ENCODE measurements at regions of chr2 and their contacts with region 1.

Region 1: GRCh38 chr2:46275973-46276372 is 21.2 kb upstream of the EPAS1 start:
- DNase-seq: peak; percentile 45 to 87 (median 82)
- ATAC-seq: peak; percentile 93
- H3K4me3 ChIP-seq: no peak overlapping the region
- H3K27ac ChIP-seq: peak overlapping the region; percentile 66 to 68
- H3K4me1 ChIP-seq: peaks cover 14 to 28% of the 10 kb centered on the region in 2 donors
- H3K27me3 ChIP-seq: no peaks in the 10 kb centered on the region
- CTCF ChIP-seq: no peak

Region 2: DNA sequence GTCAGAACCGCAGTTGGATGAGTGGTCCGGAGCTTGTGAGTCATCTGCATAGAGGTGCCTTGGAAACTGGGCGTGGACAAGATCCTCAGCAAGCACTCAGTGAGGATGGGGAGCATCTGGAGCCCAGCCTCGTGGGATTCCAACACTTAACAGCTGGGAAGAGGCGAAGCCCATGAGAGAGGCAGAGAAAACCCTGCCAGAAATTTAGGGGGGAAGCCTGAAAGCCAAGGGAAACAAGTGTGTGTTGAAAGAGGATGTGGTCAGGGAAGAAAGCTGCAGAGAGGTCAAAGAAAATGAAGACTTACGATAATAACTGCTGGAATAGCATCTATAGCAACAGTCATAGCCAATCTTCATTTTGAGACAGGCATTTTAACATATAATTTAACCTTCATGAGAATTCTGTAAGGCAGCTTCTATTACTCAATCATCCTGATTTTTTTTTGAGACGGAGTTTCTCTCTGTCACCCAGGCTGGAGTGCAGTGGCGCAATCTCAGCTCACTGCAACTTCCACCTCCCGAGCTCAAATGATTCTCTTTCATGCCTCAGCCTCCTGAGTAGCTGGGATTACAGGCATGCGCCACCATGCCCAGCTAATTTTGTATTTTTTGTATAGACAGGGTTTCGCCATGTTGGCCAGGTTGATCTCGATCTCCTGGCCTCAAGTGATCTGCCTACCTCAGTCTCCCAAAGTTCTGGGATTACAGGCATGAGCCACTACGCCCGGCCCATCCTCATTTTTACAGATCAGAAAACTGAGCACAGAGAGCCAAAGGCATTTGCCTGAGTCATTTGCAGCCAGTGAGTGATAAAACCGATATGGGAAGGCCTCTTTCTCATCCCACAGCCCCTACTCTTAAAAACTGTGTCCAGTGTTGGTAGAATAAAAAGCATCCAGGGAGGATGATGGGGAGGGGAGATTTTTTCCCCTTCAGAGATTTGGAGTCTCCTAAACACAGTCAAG is 193.2 kb before region 1 on chr2:
- intact Hi-C with region 1: loop called in 1 of 2 experiments (anchors 10 kb)
- DNase-seq: peak in 1 of 4 donors; percentile 51
- ATAC-seq: peak; percentile 57
- H3K4me3 ChIP-seq: no peak overlapping the region
- H3K27ac ChIP-seq: peak overlapping the region; percentile 43 to 69
- H3K4me1 ChIP-seq: peaks cover 10 to 46% of the 10 kb centered on the region in 2 donors
- H3K27me3 ChIP-seq: no peaks in the 10 kb centered on the region
- CTCF ChIP-seq: no peak

Region 3: DNA sequence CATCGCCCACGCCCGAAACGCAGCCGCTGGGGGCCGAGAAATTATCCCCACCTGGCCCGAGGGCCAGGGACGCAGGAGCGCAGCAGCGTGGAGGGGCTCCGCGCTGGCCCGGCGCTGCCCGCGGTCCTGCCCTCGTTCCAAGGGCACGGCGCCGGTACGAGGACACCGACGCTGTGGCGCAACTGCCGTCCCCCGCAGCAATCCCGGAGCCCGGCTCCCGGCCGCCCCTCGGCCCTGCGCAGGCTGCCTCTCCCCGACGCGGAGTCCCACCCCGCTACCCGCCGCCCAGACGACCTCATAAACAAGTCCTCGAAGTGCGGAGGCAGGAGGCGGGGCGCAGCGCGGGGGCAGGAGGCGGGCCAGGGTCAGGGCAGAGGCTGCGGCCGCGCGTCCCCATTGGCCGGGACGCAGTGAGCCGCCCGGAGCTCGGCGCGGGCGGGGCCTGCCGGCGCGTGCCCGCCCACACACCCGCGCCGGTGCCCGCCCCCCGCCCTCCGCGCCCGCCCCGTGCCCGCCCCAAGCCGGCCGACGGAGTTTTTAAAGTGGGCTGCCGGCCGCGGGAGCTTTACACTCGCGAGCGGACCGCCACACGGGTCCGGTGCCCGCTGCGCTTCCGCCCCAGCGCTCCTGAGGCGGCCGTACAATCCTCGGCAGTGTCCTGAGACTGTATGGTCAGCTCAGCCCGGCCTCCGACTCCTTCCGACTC is 21.0 kb after region 1 on chr2 and contains the start of gene EPAS1:
- intact Hi-C with region 1: no loop called
- DNase-seq: peak; percentile 82 to 99 (median 94)
- ATAC-seq: peak; percentile 81
- H3K4me3 ChIP-seq: peak within 1 kb of the TSS; percentile 79 to 93
- H3K27ac ChIP-seq: peak within 1 kb of the TSS; percentile 91 to 97
- H3K4me1 ChIP-seq: peaks cover 12 to 38% of the 10 kb centered on the region in 2 donors
- H3K27me3 ChIP-seq: peaks cover 0 to 57% of the 10 kb centered on the region in 2 donors
- CTCF ChIP-seq: no peak
- polyA plus RNA-seq, gene EPAS1: 190 to 277 (median 237) TPM

Region 4: GRCh38 chr2:46657042-46657504 is 381.1 kb after region 1 on chr2:
- intact Hi-C with region 1: no loop called
- DNase-seq: peak in 2 of 4 donors; percentile 67 to 86
- ATAC-seq: peak; percentile 81
- H3K4me3 ChIP-seq: no peak overlapping the region
- H3K27ac ChIP-seq: peak overlapping the region in 1 of 2 donors; percentile 48
- H3K4me1 ChIP-seq: peaks cover 10 to 13% of the 10 kb centered on the region in 2 donors
- H3K27me3 ChIP-seq: no peaks in the 10 kb centered on the region
- CTCF ChIP-seq: peak in 1 of 2 donors; percentile 13